ENCODE measurements at regions of chrX and their contacts with region 1.

Region 1: GRCh38 chrX:149938427-149939270 is at the start of gene EOLA2:
- DNase-seq: peak; percentile 96 to 99
- H3K4me3 ChIP-seq: peak within 1 kb of the TSS; percentile 85
- H3K27ac ChIP-seq: peak within 1 kb of the TSS; percentile 95
- H3K4me1 ChIP-seq: peaks cover 4% of the 10 kb centered on the region; the same call in 1 of the 2 replicates
- H3K27me3 ChIP-seq: no peaks in the 10 kb centered on the region
- CTCF ChIP-seq: peak; percentile 84
- total RNA-seq, gene EOLA2: 44.3 and 49.2 TPM in 2 replicates

Region 2: GRCh38 chrX:149871940-149872339 is 66.7 kb before region 1 on chrX:
- CTCF ChIA-PET with region 1: no interaction called
- POLR2A ChIA-PET with region 1: interaction called, 14 read pairs
- intact Hi-C with region 1: no loop called
- DNase-seq: peak; percentile 26 to 34
- H3K4me3 ChIP-seq: no peak overlapping the region
- H3K27ac ChIP-seq: no peak overlapping the region
- H3K4me1 ChIP-seq: 0 out of 2 replicates have a peak, but pooled peaks cover 8% of the 10 kb centered on the region
- H3K27me3 ChIP-seq: no peaks in the 10 kb centered on the region
- CTCF ChIP-seq: peak; percentile 71

Region 3: DNA sequence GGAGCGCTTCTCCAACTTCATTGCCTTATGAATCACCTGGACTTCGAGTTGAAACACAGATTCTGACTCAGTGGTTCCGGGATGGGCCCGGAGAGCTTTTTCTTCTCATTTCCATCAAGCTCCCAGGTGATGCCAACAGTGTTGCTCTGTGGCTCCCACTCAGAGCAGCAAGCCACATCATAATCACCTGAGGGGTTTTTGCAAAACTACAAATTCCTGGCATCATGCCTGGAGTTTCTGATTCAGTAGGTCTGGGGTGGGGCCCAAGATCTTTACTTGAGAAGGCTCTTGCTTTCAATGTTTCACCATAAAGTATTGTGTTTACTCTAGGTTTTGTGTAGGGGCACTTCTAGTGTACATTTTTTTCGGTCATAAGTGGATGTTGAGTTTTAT is 636.8 kb after region 1 on chrX:
- CTCF ChIA-PET with region 1: no interaction called
- POLR2A ChIA-PET with region 1: interaction called, 13 read pairs
- intact Hi-C with region 1: no loop called
- DNase-seq: peak; percentile 82 to 99
- H3K4me3 ChIP-seq: peak overlapping the region; percentile 29; the same call in 1 of the 2 replicates
- H3K27ac ChIP-seq: peak overlapping the region; percentile 74
- H3K4me1 ChIP-seq: peaks cover 61% of the 10 kb centered on the region
- H3K27me3 ChIP-seq: no peaks in the 10 kb centered on the region
- CTCF ChIP-seq: no peak

Region 4: DNA sequence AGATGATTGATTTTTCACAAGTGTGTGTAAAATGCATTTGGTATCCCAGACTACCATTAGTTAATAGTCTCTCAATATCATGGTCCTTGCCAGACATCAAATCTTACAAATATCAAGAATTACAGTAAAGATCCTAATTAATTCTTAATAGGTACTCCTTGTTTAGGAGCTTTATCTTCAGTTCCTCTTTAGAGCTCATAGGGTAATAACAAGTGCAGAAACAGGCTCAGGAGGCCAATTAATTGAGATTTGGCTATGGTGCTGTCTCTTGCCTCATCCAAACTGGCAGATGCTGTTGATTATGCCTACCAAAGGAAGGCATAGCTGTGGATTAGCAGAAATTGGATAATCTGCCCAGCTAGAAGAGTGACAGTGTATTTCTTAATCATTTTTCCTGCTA is 761.5 kb after region 1 on chrX:
- CTCF ChIA-PET with region 1: no interaction called
- POLR2A ChIA-PET with region 1: interaction called, 13 read pairs
- intact Hi-C with region 1: no loop called
- DNase-seq: no peak
- H3K4me3 ChIP-seq: no peak overlapping the region
- H3K27ac ChIP-seq: no peak overlapping the region
- H3K4me1 ChIP-seq: peaks cover 19% of the 10 kb centered on the region
- H3K27me3 ChIP-seq: no peaks in the 10 kb centered on the region
- CTCF ChIP-seq: no peak